ENCODE measurements at regions of chr7 and their contacts with region 1.

Region 1: DNA sequence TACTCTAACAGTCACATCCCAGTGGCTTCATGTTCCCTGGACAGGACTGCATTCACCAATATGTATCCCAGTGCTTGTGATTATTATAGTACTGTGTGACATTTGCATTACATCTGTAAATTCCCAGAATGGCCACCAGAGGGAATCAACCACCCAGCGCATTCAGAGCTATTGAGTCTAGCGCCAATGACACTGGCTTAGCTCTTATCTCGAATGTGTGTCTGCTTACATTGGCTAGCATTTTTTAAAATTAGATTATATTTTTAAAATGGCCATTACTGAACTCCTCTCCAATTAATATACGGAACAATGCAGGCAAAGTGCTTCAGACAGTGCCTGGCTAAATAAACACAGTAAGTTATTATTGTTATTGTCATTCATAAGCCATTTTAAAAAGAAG is 36.3 kb downstream of the TRIL start:
- DNase-seq: peak; percentile 13
- H3K4me3 ChIP-seq: no peak overlapping the region
- H3K27ac ChIP-seq: no peak overlapping the region
- H3K27me3 ChIP-seq: peaks cover 23% of the 10 kb centered on the region
- CTCF ChIP-seq: peak; percentile 93

Region 2: DNA sequence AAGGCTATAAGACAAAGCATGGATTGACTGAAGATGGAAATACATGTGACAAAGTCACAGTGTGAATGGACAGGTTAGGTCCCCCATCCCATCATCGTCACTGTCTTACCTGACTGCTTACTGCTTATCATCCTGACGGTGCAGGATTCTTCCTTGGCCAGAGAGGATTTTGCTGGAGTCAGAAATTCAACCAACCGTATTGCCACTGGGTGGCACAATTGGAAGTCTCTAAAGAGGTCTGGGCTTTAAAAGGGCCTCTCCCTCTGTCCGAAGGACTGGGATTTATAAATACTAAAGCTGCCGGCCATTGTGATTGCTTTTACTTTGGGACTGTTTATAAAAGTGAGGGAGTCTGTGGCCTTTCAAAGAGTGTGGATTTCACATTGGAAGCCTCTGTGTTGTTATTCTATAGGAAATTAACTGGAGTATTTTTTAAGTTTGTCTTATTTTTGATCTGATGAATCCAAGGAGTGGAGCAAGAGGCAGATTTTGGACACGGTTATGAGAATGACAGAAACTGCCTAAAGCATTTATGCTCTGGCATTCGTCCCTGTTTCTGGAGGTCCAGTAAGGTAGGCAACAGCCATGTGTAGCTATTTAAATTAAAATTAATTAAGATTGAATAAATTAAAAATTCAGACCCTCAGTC is 622.8 kb before region 1 on chr7:
- CTCF ChIA-PET with region 1: interaction called, 16 read pairs
- POLR2A ChIA-PET with region 1: no interaction called
- DNase-seq: no peak
- H3K4me3 ChIP-seq: no peak overlapping the region
- H3K27ac ChIP-seq: no peak overlapping the region
- H3K27me3 ChIP-seq: no peaks in the 10 kb centered on the region
- CTCF ChIP-seq: peak; percentile 68

Region 3: GRCh38 chr7:28874001-28874400 is 47.8 kb before region 1 on chr7:
- CTCF ChIA-PET with region 1: interaction called, 11 read pairs
- POLR2A ChIA-PET with region 1: no interaction called
- DNase-seq: no peak
- H3K4me3 ChIP-seq: no peak overlapping the region
- H3K27ac ChIP-seq: no peak overlapping the region
- H3K27me3 ChIP-seq: peaks cover 15% of the 10 kb centered on the region
- CTCF ChIP-seq: no peak

Region 4: DNA sequence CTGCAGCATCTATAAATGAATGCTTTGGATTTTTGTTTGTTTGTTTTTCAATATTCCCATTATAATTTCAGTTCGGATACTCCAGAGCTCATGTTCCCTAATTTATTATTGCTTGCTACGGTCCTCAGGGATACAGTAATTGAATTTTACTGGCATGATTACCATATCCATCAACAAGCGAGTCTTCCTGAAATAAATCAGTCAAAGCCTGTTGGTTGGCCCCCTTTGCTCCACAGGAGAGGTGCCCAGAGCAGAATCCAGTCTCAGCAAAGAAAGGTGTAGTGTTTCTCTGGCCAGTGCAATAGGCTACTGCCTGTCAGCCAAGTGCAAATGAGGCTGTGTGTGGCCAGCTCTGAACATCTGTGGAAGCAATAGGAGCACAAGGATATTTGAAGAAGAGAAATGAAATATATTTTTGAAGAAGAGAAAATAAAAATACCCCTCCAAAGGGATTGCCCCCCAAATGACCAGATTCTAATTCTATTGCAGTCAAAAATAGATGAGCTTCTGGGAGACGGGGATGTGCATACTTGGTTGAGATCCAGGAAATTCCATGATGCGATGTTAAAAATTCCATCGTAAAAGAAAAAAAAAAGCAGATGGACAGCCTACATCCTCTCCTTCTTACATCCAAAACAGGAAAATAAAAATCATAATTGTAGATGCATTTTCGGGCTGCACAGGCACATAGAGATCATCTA is 18.2 kb after region 1 on chr7:
- CTCF ChIA-PET with region 1: interaction called, 30 read pairs
- POLR2A ChIA-PET with region 1: no interaction called
- DNase-seq: no peak
- H3K4me3 ChIP-seq: no peak overlapping the region
- H3K27ac ChIP-seq: no peak overlapping the region
- H3K27me3 ChIP-seq: peaks cover 14% of the 10 kb centered on the region
- CTCF ChIP-seq: no peak

Region 5: DNA sequence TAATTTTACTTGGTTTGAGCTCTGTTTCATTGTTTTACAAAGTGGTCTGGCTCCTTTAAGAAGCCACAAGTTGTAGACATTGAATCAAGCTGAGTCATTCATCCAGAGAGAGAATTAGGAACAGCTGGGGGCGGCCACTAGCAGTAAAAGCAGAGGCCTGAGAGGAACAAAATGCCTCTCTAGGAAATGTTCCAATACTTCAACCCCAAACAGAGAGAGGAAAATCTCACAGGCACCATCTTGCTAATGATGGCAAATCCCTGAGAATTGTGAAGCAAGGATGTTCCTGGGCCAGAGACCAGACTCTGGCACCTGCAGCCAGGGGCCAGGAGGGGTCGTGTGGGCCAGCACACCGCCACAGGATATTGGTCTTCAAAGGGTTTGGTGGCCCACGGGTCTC is 62.8 kb after region 1 on chr7:
- CTCF ChIA-PET with region 1: interaction called, 31 read pairs
- POLR2A ChIA-PET with region 1: no interaction called
- DNase-seq: peak; percentile 66
- H3K4me3 ChIP-seq: no peak overlapping the region
- H3K27ac ChIP-seq: peak overlapping the region; percentile 66
- H3K27me3 ChIP-seq: no peaks in the 10 kb centered on the region
- CTCF ChIP-seq: no peak

Region 6: DNA sequence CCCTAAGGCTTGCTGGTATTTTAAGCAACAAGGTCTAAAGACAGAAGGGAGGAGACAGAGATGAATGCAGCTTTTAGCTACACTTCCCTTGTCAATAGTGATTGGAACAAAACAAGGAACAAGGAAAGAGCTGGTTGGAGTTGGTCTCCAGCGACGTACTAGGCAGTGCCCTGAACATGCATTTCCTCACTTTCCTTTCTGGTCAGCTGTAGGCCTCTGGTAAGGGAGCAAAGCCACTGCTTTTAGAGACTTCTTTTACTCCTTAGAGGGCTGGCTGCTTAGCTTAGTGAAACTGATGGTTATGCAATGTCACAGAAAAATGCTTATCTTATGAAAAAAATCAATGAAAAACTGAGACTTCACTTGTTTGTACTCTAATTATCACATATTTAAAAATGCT is 111.8 kb after region 1 on chr7:
- CTCF ChIA-PET with region 1: interaction called, 10 read pairs
- POLR2A ChIA-PET with region 1: no interaction called
- DNase-seq: no peak
- H3K4me3 ChIP-seq: no peak overlapping the region
- H3K27ac ChIP-seq: no peak overlapping the region
- H3K27me3 ChIP-seq: no peaks in the 10 kb centered on the region
- CTCF ChIP-seq: no peak

Region 7: DNA sequence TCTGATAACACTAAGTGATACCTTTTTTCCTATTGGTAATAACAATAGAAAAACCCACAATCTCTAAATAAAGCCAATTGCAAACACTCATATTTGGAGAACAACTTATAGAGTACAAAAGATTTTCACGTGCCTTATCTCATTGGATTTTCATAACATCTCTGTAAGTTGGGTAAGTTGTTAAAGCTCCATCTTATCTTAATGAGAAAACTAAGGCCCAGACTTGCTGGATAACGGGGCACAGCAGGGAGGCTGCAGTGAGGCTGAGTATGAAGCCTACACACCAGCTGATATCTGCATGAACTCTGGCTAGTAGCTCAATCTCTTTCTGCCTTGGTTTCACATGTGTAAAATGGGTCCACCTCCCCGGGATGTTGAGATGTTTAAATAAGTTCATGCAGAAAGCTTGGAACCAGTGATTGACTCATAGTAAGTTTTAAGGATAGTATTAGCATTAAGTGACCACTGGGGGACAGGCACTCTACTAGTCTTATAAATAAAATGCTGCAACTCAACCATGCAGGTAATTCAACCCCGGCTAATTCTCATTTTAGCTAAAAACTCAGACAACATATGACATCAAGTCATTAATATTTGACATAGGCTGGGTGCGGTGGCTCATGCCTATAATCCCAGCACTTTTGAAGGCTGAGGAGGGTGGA is 197.8 kb after region 1 on chr7:
- CTCF ChIA-PET with region 1: interaction called, 23 read pairs
- POLR2A ChIA-PET with region 1: no interaction called
- DNase-seq: no peak
- H3K4me3 ChIP-seq: no peak overlapping the region
- H3K27ac ChIP-seq: no peak overlapping the region
- H3K27me3 ChIP-seq: no peaks in the 10 kb centered on the region
- CTCF ChIP-seq: no peak

Measured in AG04450 (cell line).